ENCODE measurements at regions of chr2 and their contacts with region 1.

Region 1: DNA sequence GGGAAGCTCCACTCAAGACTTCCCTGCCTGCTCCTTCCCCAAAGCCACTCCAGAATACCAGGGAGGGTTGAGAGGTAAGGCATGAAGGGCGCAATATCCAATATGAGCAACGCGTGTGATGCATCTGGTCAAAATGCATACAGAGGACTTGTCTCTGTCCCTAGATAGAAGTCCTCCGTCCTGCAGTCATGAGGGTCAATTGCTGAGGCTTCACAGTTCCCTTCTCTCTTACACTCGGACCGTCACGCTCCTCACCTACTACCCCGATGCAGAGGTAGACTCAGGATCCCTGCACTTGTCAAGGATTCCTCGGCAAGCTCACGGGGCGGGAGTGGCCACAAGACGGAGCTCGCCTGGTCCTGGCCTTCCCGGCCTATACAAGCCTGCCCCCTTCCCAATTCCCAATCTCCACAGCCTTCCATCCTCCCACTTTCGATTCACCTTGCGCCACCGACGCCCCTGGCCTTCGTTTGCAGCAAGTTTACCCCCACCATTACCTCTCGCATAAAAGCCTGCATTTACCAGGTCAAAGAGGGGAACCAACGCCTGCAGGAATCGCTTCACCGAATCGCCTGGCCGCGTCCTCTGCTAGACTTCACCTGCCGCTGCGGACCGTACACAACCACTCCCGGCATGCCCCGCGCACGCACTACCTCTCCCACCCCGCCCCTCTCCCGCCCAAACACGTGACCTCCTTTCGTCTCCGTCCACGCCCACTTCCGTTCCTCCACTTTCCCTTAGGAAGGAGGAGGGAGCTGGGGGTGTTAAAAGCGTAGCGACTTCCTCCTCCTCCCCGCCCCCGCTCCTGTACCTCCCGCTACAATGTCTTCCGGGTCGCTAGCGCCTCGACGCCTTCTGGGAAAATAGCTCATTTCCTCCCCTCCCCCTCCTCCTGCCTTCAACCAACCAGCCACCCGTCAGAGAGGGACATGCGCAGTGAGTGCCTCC is at the start of gene ORC4:
- DNase-seq: peak; percentile 78
- ATAC-seq: peak; percentile 89
- H3K4me3 Mint-ChIP-seq: peak within 1 kb of the TSS; percentile 100
- H3K27ac Mint-ChIP-seq: peak within 1 kb of the TSS; percentile 95
- H3K4me1 Mint-ChIP-seq: peaks cover 71% of the 10 kb centered on the region
- H3K27me3 Mint-ChIP-seq: no peaks in the 10 kb centered on the region
- CTCF ChIP-seq: no peak
- total RNA-seq, gene ORC4: 28.2 and 30.7 TPM in 2 replicates

Region 2: DNA sequence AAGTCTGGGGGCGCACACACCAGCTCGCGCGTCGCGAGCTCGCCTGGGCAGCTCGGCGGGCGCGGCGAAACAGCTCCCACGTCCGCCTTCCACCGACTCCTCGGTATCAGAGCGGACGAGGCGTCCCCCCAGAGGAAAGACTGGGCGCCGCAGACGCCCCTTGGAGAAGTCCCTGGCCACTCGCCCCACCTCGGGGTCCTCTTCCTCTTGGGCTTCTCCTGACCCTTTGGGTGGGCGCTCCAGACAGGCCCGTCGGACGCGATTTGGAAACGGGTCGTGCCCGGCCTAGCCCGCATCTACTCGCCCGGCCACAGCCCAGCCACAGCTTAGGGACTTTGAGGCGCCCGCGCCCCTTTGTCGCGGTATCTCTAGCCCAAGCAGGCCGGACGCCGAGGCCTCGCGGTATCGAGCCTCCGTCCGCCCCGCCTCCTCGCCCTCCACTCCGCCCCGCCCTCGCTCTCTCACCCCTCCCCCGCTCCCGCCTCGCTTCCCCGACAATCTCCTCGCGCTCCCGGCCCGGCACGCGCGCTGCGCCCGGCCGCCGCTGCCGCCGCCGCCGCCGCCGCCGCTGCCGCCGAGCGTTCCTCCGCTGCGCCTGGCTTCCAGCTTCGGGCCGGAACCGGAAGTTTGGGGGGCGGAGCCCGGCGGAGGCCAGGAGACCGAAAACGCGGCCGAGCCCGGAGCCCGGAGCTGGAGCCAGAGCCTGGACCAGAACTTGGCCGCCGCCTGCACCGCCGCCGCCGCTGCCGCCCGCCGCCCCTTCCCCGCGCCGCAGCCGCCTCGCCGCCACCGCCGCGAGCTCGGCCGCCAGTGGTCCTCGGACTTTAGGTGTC is 176.3 kb before region 1 on chr2:
- CTCF ChIA-PET with region 1: interaction called, 3 read pairs
- POLR2A ChIA-PET with region 1: interaction called, 13 read pairs
- intact Hi-C with region 1: loop called (anchors 1 kb)
- DNase-seq: peak; percentile 88
- ATAC-seq: peak; percentile 83
- H3K4me3 Mint-ChIP-seq: peak overlapping the region; percentile 88
- H3K27ac Mint-ChIP-seq: peak overlapping the region; percentile 80
- H3K4me1 Mint-ChIP-seq: peaks cover 29% of the 10 kb centered on the region
- H3K27me3 Mint-ChIP-seq: peaks cover 31% of the 10 kb centered on the region
- CTCF ChIP-seq: no peak

Region 3: GRCh38 chr2:148042219-148042618 is 21.8 kb after region 1 on chr2:
- CTCF ChIA-PET with region 1: no interaction called
- POLR2A ChIA-PET with region 1: interaction called, 23 read pairs
- intact Hi-C with region 1: loop called (anchors 1 kb)
- DNase-seq: no peak
- ATAC-seq: peak; percentile 66
- H3K4me3 Mint-ChIP-seq: no peak overlapping the region
- H3K27ac Mint-ChIP-seq: peak overlapping the region; percentile 56
- H3K4me1 Mint-ChIP-seq: peaks cover 30% of the 10 kb centered on the region
- H3K27me3 Mint-ChIP-seq: no peaks in the 10 kb centered on the region
- CTCF ChIP-seq: no peak

Region 4: GRCh38 chr2:148048475-148049221 is 28.3 kb after region 1 on chr2:
- CTCF ChIA-PET with region 1: no interaction called
- POLR2A ChIA-PET with region 1: interaction called, 6 read pairs
- intact Hi-C with region 1: loop called (anchors 1 kb)
- DNase-seq: no peak
- ATAC-seq: peak; percentile 85
- H3K4me3 Mint-ChIP-seq: peak overlapping the region; percentile 42
- H3K27ac Mint-ChIP-seq: peak overlapping the region; percentile 68
- H3K4me1 Mint-ChIP-seq: peaks cover 48% of the 10 kb centered on the region
- H3K27me3 Mint-ChIP-seq: no peaks in the 10 kb centered on the region
- CTCF ChIP-seq: no peak

Region 5: DNA sequence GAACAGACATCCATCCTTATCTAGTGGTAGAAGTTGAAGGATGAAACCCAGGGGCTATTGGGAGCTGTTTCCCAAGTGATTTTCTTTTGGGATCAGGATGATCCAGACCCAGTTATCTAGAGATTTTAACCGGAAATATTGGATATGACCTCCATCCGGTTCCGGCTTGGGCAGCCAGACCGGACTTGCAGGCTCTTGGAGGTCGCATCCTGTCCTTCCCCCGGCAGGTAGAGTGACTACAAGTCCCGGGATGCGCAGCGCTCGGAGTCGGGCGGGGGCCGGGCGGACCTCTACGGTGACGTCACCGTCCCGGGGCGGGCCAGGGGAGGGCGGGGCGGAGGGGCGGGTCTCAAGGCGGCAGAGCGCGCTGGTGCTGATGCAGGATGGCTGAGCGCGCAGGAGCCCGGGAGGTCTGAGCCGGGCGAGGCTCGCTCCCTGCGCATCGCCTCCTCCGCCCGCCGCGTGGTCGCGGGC is 854.5 kb after region 1 on chr2 and contains the start of gene KIF5C:
- CTCF ChIA-PET with region 1: no interaction called
- POLR2A ChIA-PET with region 1: no interaction called
- intact Hi-C with region 1: loop called (anchors 1 kb)
- DNase-seq: peak; percentile 68
- ATAC-seq: peak; percentile 93
- H3K4me3 Mint-ChIP-seq: peak within 1 kb of the TSS; percentile 82
- H3K27ac Mint-ChIP-seq: no peak within 1 kb of the TSS
- H3K4me1 Mint-ChIP-seq: peaks cover 14% of the 10 kb centered on the region
- H3K27me3 Mint-ChIP-seq: peaks cover 39% of the 10 kb centered on the region
- CTCF ChIP-seq: no peak
- total RNA-seq, gene KIF5C: 1.4 and 2.6 TPM in 2 replicates